PC-9 (cell line): ENCODE measurements at regions of chr15 and their contacts with region 1.

Region 1: DNA sequence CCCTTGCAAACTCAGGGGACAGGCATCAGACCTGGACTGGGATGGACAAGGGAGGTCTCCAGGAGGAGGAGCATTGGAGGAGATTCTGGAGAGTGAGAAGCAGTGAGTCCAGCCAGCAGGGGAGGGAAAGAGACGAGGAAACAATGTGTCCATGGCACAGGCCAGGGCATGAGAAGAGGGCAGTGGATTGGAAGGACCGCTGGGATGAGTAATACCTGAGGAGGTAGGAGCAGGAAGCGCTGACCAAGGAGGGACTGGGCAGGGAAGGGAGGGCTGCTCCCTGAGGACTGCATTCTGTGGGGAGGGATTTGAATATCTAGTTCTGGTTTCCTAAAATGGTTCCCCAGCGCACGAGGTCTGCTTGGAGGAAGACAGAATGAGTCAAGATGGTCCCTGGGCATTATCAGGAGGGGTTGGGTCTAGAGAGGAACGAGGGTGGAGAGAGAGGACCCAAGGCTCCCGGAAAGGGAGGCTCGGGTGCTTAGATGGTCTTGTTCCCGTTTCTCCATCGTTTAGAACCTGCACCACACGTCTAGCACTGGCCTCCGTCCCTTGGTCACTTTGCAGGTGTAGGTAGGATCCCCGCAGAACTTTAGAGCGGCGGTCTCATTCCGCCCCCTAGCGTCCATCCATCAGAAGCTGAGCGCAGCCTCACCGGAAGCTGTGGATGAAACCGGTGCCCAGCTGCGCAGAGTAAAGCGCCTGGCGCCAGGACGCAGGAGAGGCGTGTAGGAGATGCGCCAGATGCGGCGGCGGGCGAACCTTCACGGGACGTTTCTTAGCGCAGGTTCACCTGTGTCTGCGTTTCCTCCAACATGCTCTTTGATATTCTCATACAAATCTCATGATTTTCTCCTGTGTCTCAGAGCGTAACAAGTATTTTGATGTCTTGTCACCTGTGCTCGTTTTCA is 190.7 kb upstream of the NDN start:
- DNase-seq: peak in 1 of 2 experiments; percentile 26
- H3K4me3 ChIP-seq: no peak overlapping the region
- H3K27ac ChIP-seq: no peak overlapping the region
- H3K4me1 ChIP-seq: no peaks in the 10 kb centered on the region
- H3K27me3 ChIP-seq: no peaks in the 10 kb centered on the region
- CTCF ChIP-seq: peak; percentile 61

Region 2: GRCh38 chr15:23497710-23498111 is 380.0 kb before region 1 on chr15:
- CTCF ChIA-PET with region 1: no interaction called
- POLR2A ChIA-PET with region 1: no interaction called
- intact Hi-C with region 1: loop called (anchors 5 kb)
- DNase-seq: peak in 1 of 2 experiments; percentile 9
- H3K4me3 ChIP-seq: no peak overlapping the region
- H3K27ac ChIP-seq: no peak overlapping the region
- H3K4me1 ChIP-seq: no peaks in the 10 kb centered on the region
- H3K27me3 ChIP-seq: peaks cover 7% of the 10 kb centered on the region; the same call in 1 of the 2 replicates
- CTCF ChIP-seq: peak; percentile 63

Region 3: GRCh38 chr15:23642413-23643044 is 235.2 kb before region 1 on chr15:
- CTCF ChIA-PET with region 1: no interaction called
- POLR2A ChIA-PET with region 1: no interaction called
- intact Hi-C with region 1: loop called (anchors 5 kb)
- DNase-seq: peak; percentile 35 to 50
- H3K4me3 ChIP-seq: no peak overlapping the region
- H3K27ac ChIP-seq: no peak overlapping the region
- H3K4me1 ChIP-seq: no peaks in the 10 kb centered on the region
- H3K27me3 ChIP-seq: peaks cover 16% of the 10 kb centered on the region; the same call in 1 of the 2 replicates
- CTCF ChIP-seq: peak; percentile 84